GM23248 (cell line): ENCODE measurements at regions of chr2 and their contacts with region 1.

Region 1: DNA sequence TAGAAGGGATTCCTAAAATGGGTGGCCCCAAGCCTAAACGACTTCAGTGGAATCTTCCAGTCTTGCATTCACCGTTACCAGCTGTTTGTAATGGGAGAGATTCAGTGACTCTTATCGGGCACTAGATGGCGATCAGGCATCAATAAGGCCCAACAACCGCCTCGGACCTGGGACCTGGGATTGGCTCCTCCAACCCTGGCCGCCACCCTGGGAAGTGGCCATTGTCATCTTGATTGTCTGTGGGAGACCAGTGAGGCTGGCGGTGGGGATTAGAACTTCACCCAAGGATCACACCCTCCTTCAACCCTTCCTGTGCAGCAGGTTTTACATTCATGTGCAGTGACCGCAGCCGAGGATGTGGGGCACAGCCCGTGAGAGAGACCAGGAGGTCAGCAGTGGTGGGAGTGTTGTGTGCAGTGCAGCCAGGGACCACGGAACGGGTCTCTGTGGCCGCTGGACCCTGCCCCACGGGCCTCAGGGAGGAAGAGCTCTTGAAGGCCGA is 85.3 kb downstream of the SPP2 start:
- DNase-seq: peak; percentile 88
- H3K4me3 ChIP-seq: no peak overlapping the region
- H3K27ac ChIP-seq: no peak overlapping the region
- H3K4me1 ChIP-seq: 0 out of 2 replicates have a peak, but pooled peaks cover 5% of the 10 kb centered on the region
- H3K27me3 ChIP-seq: no peaks in the 10 kb centered on the region

Region 2: DNA sequence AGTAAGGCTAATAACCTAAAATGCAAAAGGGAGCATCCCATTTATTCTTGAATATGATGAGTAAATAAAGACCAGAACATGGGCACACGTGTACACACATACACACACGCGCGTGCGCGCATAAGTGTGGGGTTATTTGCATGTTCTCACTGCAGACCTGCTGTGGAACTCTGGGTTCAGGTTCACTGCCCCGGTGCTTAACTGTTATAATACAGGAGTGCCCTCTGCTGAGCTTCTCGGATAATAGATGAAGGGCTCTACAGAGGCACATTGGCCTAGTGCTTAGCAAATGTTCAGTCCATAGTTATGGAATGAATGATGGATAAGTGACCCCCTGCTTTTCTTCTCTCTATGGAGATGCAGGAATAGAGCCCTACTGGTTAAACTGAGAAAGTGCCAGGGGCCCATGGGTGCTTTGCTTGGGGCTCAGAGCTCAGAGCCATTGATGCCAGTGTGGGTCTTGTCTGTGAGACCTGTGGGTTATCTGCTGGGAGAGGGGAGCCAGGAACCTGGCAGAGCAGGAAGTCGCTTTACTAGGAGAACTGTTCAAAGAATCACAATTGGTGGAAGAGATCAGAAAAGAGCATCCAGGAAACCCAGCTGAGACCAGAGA is 364.7 kb after region 1 on chr2:
- in situ Hi-C with region 1: loop called (anchors 5 kb)
- DNase-seq: peak; percentile 77
- H3K4me3 ChIP-seq: no peak overlapping the region
- H3K27ac ChIP-seq: no peak overlapping the region
- H3K4me1 ChIP-seq: peaks cover 12% of the 10 kb centered on the region
- H3K27me3 ChIP-seq: no peaks in the 10 kb centered on the region

Region 3: GRCh38 chr2:234544659-234545611 is 409.2 kb after region 1 on chr2:
- in situ Hi-C with region 1: loop called (anchors 10 kb)
- DNase-seq: peak; percentile 76
- H3K4me3 ChIP-seq: no peak overlapping the region
- H3K27ac ChIP-seq: no peak overlapping the region
- H3K4me1 ChIP-seq: peaks cover 3% of the 10 kb centered on the region; the same call in 1 of the 2 replicates
- H3K27me3 ChIP-seq: no peaks in the 10 kb centered on the region

Region 4: GRCh38 chr2:235106874-235107639 is 971.3 kb after region 1 on chr2:
- in situ Hi-C with region 1: loop called (anchors 25 kb)
- DNase-seq: peak; percentile 81
- H3K4me3 ChIP-seq: no peak overlapping the region
- H3K27ac ChIP-seq: no peak overlapping the region
- H3K4me1 ChIP-seq: peaks cover 3% of the 10 kb centered on the region; the same call in 1 of the 2 replicates
- H3K27me3 ChIP-seq: no peaks in the 10 kb centered on the region